ENCODE measurements at regions of chr14 and their contacts with region 1.

Region 1: DNA sequence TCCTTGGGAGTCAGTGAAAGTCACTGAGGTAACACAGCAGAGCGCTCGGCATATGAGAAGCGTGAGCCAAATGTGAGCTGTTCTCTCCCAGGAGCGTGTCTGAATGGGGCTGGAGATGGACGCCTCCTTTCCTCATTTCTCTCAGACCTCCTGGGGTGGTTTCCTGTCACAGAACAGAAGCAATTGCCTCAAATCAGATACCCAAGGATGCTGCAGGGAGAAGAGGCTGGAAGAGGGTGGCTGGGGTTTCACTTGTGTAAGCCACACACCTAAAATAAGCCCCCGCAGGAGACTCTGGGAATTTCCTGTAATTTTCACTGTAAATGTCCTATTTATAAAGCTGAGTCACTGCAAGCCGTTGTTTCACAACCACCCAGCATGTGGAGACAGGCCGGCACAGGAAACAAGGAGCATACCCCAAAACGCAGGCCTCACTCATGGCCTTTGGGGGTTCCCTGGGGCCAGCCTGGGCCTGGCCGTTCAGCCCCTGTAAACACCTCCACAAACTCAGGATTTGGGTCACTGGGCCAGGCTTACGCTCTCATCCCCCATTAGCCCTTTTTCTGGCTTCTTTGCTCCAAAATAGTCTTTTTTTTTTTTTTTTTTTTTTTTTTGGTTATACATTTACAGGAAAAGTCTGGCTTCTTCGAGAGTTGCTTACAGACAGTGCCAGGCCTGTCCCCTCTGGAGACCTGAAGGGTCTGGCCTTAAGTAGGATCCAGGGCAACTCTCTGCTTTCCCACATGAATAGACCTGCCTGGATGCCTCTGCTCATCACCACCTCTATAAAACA is 55.3 kb downstream of the VCPKMT start:
- DNase-seq: peak; percentile 89
- ATAC-seq: peak; percentile 71
- H3K4me3 ChIP-seq: peak overlapping the region; percentile 63 to 76 (median 64)
- H3K27ac ChIP-seq: peak overlapping the region; percentile 88
- H3K4me1 ChIP-seq: peaks cover 54% of the 10 kb centered on the region
- H3K27me3 ChIP-seq: no peaks in the 10 kb centered on the region
- CTCF ChIP-seq: 0 out of 2 replicates have a peak, but pooled peaks have one; percentile 3
- EP300 ChIP-seq: peak in 1 of 2 experiments; percentile 66; a peak in 2 of 4 replicates
- POLR2A ChIP-seq: peak in 1 of 2 experiments; percentile 45; a peak in 1 of 4 replicates
- RAD21 ChIP-seq: no peak; the same call in 1 of the 2 replicates

Region 2: GRCh38 chr14:49862089-49862673 is 198.9 kb before region 1 on chr14:
- CTCF ChIA-PET with region 1: no interaction called
- POLR2A ChIA-PET with region 1: interaction called, 32 read pairs
- in situ Hi-C with region 1: no loop called
- intact Hi-C with region 1: loop called (anchors 2 kb)
- DNase-seq: peak; percentile 69
- ATAC-seq: peak; percentile 69
- H3K4me3 ChIP-seq: peak overlapping the region; percentile 72 to 89 (median 80)
- H3K27ac ChIP-seq: peak overlapping the region; percentile 92
- H3K4me1 ChIP-seq: peaks cover 30% of the 10 kb centered on the region
- H3K27me3 ChIP-seq: no peaks in the 10 kb centered on the region; a peak in 1 of 5 replicates
- CTCF ChIP-seq: peak; percentile 89
- EP300 ChIP-seq: no peak
- POLR2A ChIP-seq: no peak
- RAD21 ChIP-seq: no peak

Region 3: GRCh38 chr14:49966304-49966809 is 94.7 kb before region 1 on chr14:
- CTCF ChIA-PET with region 1: no interaction called
- POLR2A ChIA-PET with region 1: interaction called, 28 read pairs
- in situ Hi-C with region 1: no loop called
- intact Hi-C with region 1: no loop called
- DNase-seq: peak; percentile 84
- ATAC-seq: peak; percentile 100
- H3K4me3 ChIP-seq: peak overlapping the region; percentile 18 to 45 (median 40); a peak in 5 of 6 replicates
- H3K27ac ChIP-seq: peak overlapping the region; percentile 86
- H3K4me1 ChIP-seq: peaks cover 68% of the 10 kb centered on the region
- H3K27me3 ChIP-seq: no peaks in the 10 kb centered on the region
- CTCF ChIP-seq: no peak
- EP300 ChIP-seq: no peak
- POLR2A ChIP-seq: peak; percentile 61 to 64
- RAD21 ChIP-seq: no peak

Region 4: DNA sequence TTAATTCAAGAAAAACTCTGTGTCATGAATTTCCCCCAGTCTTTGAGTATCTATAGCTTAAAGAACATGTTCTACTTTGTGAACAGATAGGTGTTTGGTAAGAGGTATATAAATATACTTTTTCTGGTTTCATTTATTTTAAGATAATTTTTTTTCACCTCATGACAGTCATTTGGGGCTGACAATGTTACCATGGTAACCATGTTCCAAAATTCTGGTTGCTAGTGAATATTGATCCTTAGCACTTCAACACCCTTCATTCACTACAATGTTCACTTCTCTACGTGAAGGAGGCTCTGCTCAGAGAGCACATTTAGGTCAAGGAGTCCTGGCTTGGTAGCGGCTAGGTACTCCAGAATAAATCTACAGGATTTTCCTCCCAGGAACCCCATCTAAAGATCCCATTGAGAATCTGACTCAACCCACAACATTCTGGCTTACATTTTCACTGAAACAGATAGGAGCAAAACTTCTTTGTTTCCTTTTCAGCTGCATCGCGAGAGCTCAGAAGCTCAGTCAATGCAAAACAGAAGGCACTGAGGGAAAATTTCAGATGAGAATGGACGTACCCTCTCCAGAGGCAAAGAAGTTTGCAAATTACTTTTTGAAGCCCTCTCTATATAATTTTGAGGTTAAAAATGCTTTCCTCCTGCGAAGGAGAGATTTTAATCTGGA is 74.6 kb before region 1 on chr14:
- CTCF ChIA-PET with region 1: no interaction called
- POLR2A ChIA-PET with region 1: interaction called, 14 read pairs
- in situ Hi-C with region 1: no loop called
- intact Hi-C with region 1: no loop called
- DNase-seq: peak; percentile 52
- ATAC-seq: peak; percentile 55
- H3K4me3 ChIP-seq: peak overlapping the region; percentile 24 to 48 (median 36); a peak in 4 of 6 replicates
- H3K27ac ChIP-seq: peak overlapping the region; percentile 98
- H3K4me1 ChIP-seq: peaks cover 73% of the 10 kb centered on the region
- H3K27me3 ChIP-seq: no peaks in the 10 kb centered on the region
- CTCF ChIP-seq: no peak
- EP300 ChIP-seq: no peak
- POLR2A ChIP-seq: no peak
- RAD21 ChIP-seq: no peak

Region 5: DNA sequence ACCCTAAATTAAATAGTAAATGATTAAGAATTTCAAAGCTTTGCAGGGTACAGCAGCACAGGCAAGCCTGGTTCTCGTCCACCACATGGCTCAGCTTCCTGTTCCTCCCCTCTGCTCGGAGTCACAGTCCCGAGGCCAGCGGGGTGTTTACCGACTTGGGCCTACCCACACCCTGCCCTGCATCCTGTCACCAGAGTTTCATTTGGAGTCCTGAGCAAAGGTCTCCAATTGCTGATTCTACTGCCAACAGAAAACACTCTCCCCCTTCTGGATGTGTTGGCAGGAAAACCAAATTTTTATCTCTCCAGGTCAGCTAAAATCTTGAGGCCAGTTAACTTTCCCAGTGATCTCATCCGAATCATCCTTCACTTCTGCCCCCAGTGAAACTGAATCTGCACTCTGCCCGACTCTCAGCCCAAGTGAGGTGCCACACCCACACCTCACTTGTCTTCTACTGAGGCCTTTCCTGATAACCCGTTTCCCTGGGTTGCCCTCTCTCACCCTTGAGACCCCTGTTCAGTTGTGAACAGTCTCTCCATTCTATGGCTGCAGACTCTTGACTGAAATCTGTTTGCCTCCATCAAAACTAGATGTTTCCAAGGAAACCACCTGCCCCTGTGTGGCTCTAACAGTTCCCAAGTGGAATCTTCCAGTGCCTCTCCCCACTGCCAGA is 15.9 kb before region 1 on chr14:
- CTCF ChIA-PET with region 1: no interaction called
- POLR2A ChIA-PET with region 1: interaction called, 33 read pairs
- in situ Hi-C with region 1: no loop called
- intact Hi-C with region 1: loop called (anchors 2 kb)
- DNase-seq: peak; percentile 82
- ATAC-seq: peak; percentile 92
- H3K4me3 ChIP-seq: no peak overlapping the region
- H3K27ac ChIP-seq: peak overlapping the region; percentile 65
- H3K4me1 ChIP-seq: peaks cover 75% of the 10 kb centered on the region
- H3K27me3 ChIP-seq: no peaks in the 10 kb centered on the region; a peak in 1 of 5 replicates
- CTCF ChIP-seq: peak; percentile 42
- EP300 ChIP-seq: 0 out of 4 replicates have a peak, but pooled peaks of 1 of the 2 experiments have one; percentile 19
- POLR2A ChIP-seq: no peak
- RAD21 ChIP-seq: no peak

Measured in HepG2 (cell line).